IMR-90 (cell line): ENCODE measurements at regions of chr6 and their contacts with region 1.

Region 1: GRCh38 chr6:27132532-27133280 is 114.8 kb upstream of the PRSS16 start:
- DNase-seq: peak; percentile 100
- ATAC-seq: peak; percentile 89
- H3K4me3 ChIP-seq: peak overlapping the region; percentile 50
- H3K27ac ChIP-seq: peak overlapping the region; percentile 79
- H3K4me1 ChIP-seq: no peaks in the 10 kb centered on the region
- H3K27me3 ChIP-seq: no peaks in the 10 kb centered on the region
- CTCF ChIP-seq: no peak
- POLR2A ChIP-seq: peak; percentile 99
- RAD21 ChIP-seq: no peak

Region 2: DNA sequence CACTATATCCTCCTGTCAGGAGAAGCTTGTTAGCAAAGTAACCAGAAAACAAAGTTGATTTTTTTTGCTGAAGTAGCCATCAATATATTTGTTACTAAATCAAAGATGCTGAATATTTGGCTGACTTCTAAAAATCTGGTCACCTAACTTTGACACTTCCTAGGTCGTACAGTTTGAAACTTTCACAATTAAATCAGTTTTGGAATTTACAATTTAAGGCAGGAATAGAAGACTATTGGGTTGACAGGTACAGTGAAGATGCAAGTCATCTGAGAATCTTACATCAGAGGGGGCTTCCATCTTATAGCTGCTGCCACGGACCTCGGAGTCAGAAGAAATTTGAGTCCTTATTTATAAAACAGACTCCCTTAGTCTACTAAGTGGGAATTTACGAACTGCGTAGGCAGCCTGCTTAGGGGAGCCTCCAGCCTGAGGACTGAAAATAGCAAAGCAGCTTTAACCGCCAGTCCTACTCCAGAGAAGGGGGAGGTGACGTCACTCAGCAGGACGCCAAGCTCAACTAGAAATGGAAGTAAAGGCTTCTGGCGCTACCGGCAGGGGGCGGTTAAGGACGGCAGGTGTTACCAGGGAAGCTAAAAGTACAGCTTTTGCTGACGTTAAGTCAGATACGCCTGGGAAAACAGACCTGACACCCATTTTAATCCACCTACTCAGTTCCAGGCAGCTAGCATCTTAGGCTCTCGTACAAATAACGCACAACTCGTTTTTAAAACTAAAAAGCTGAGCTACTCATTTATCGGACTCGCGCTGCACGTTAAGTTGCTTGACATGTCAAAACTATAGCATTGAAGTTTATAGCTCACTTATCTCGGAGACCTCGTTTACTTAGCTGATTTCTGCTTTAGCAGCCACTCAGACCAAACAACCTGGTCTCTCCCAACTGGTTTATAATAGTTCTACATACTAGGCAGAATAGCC is 1106.5 kb before region 1 on chr6:
- CTCF ChIA-PET with region 1: no interaction called
- POLR2A ChIA-PET with region 1: interaction called, 11 read pairs
- dilution Hi-C with region 1: no loop called
- in situ Hi-C with region 1: loop called (anchors 10 kb)
- intact Hi-C with region 1: no loop called
- DNase-seq: peak; percentile 99
- ATAC-seq: peak; percentile 41
- H3K4me3 ChIP-seq: peak overlapping the region; percentile 68; the same call in 1 of the 2 replicates
- H3K27ac ChIP-seq: peak overlapping the region; percentile 59
- H3K4me1 ChIP-seq: peaks cover 4% of the 10 kb centered on the region
- H3K27me3 ChIP-seq: no peaks in the 10 kb centered on the region
- CTCF ChIP-seq: peak; percentile 96
- POLR2A ChIP-seq: 0 out of 2 replicates have a peak, but pooled peaks have one; percentile 38
- RAD21 ChIP-seq: peak; percentile 72

Region 3: GRCh38 chr6:27809939-27810767 is 677.4 kb after region 1 on chr6:
- CTCF ChIA-PET with region 1: interaction called, 3 read pairs
- POLR2A ChIA-PET with region 1: no interaction called
- dilution Hi-C with region 1: no loop called
- in situ Hi-C with region 1: no loop called
- intact Hi-C with region 1: loop called (anchors 1 kb)
- DNase-seq: peak; percentile 98
- ATAC-seq: peak; percentile 52
- H3K4me3 ChIP-seq: peak overlapping the region; percentile 58
- H3K27ac ChIP-seq: peak overlapping the region; percentile 87
- H3K4me1 ChIP-seq: peaks cover 3% of the 10 kb centered on the region
- H3K27me3 ChIP-seq: no peaks in the 10 kb centered on the region
- CTCF ChIP-seq: 0 out of 2 replicates have a peak, but pooled peaks have one; percentile 16
- POLR2A ChIP-seq: peak; percentile 99
- RAD21 ChIP-seq: no peak